ENCODE measurements at regions of chr17 and their contacts with region 1.

Region 1: GRCh38 chr17:7045909-7046724 is 2.2 kb upstream of the SLC16A11 start:
- DNase-seq: peak; percentile 95
- H3K4me3 ChIP-seq: peak overlapping the region; percentile 21
- H3K27ac ChIP-seq: peak overlapping the region; percentile 71
- H3K4me1 ChIP-seq: peaks cover 18% of the 10 kb centered on the region
- H3K27me3 ChIP-seq: peaks cover 7% of the 10 kb centered on the region
- CTCF ChIP-seq: peak; percentile 64

Region 2: GRCh38 chr17:7177196-7177953 is 131.3 kb after region 1 on chr17:
- intact Hi-C with region 1: loop called (anchors 2 kb)
- DNase-seq: peak; percentile 64
- H3K4me3 ChIP-seq: peak overlapping the region; percentile 24
- H3K27ac ChIP-seq: no peak overlapping the region
- H3K4me1 ChIP-seq: peaks cover 7% of the 10 kb centered on the region
- H3K27me3 ChIP-seq: no peaks in the 10 kb centered on the region
- CTCF ChIP-seq: peak; percentile 87

Measured in colonic mucosa (tissue), 4 donors.